CD4-positive, alpha-beta memory T cell (primary cell): ENCODE measurements at regions of chr21 and their contacts with region 1.

Region 1: GRCh38 chr21:34630536-34631143 is 15.7 kb upstream of the RCAN1 start:
- DNase-seq: peak in 4 of 5 donors; percentile 52 to 61 (median 58)
- H3K4me3 ChIP-seq: no peak overlapping the region
- H3K4me3 Mint-ChIP-seq: no peak overlapping the region
- H3K27ac ChIP-seq: no peak overlapping the region
- H3K27ac Mint-ChIP-seq: no peak overlapping the region
- H3K4me1 ChIP-seq: no peaks in the 10 kb centered on the region
- H3K4me1 Mint-ChIP-seq: no peaks in the 10 kb centered on the region
- H3K27me3 ChIP-seq: no peaks in the 10 kb centered on the region
- H3K27me3 Mint-ChIP-seq: peaks cover 6 to 9% of the 10 kb centered on the region in 2 donors

Region 2: GRCh38 chr21:34362136-34362444 is 268.6 kb before region 1 on chr21:
- CTCF ChIA-PET with region 1: interaction called, 26 read pairs
- POLR2A ChIA-PET with region 1: no interaction called
- intact Hi-C with region 1: loop called (anchors 1 kb)
- DNase-seq: no peak
- H3K4me3 ChIP-seq: no peak overlapping the region
- H3K4me3 Mint-ChIP-seq: no peak overlapping the region
- H3K27ac ChIP-seq: no peak overlapping the region
- H3K27ac Mint-ChIP-seq: no peak overlapping the region
- H3K4me1 ChIP-seq: no peaks in the 10 kb centered on the region
- H3K4me1 Mint-ChIP-seq: peaks cover 3 to 7% (median 5%) of the 10 kb centered on the region in 4 donors
- H3K27me3 ChIP-seq: peaks cover 6% of the 10 kb centered on the region
- H3K27me3 Mint-ChIP-seq: peaks cover 8 to 11% of the 10 kb centered on the region in 2 donors

Region 3: GRCh38 chr21:34367321-34367935 is 263.2 kb before region 1 on chr21:
- CTCF ChIA-PET with region 1: interaction called, 26 read pairs
- POLR2A ChIA-PET with region 1: no interaction called
- intact Hi-C with region 1: loop called (anchors 1 kb)
- DNase-seq: peak; percentile 24 to 53 (median 34)
- H3K4me3 ChIP-seq: no peak overlapping the region
- H3K4me3 Mint-ChIP-seq: no peak overlapping the region
- H3K27ac ChIP-seq: no peak overlapping the region
- H3K27ac Mint-ChIP-seq: no peak overlapping the region
- H3K4me1 ChIP-seq: no peaks in the 10 kb centered on the region
- H3K4me1 Mint-ChIP-seq: no peaks in the 10 kb centered on the region
- H3K27me3 ChIP-seq: no peaks in the 10 kb centered on the region
- H3K27me3 Mint-ChIP-seq: peaks cover 6 to 11% of the 10 kb centered on the region in 2 donors

Region 4: GRCh38 chr21:34509151-34509550 is 121.5 kb before region 1 on chr21:
- CTCF ChIA-PET with region 1: no interaction called
- POLR2A ChIA-PET with region 1: no interaction called
- intact Hi-C with region 1: loop called (anchors 1 kb)
- DNase-seq: no peak
- H3K4me3 ChIP-seq: no peak overlapping the region
- H3K4me3 Mint-ChIP-seq: no peak overlapping the region
- H3K27ac ChIP-seq: no peak overlapping the region
- H3K27ac Mint-ChIP-seq: no peak overlapping the region
- H3K4me1 ChIP-seq: no peaks in the 10 kb centered on the region
- H3K4me1 Mint-ChIP-seq: no peaks in the 10 kb centered on the region
- H3K27me3 ChIP-seq: no peaks in the 10 kb centered on the region
- H3K27me3 Mint-ChIP-seq: peaks cover 0 to 4% of the 10 kb centered on the region in 2 donors

Region 5: DNA sequence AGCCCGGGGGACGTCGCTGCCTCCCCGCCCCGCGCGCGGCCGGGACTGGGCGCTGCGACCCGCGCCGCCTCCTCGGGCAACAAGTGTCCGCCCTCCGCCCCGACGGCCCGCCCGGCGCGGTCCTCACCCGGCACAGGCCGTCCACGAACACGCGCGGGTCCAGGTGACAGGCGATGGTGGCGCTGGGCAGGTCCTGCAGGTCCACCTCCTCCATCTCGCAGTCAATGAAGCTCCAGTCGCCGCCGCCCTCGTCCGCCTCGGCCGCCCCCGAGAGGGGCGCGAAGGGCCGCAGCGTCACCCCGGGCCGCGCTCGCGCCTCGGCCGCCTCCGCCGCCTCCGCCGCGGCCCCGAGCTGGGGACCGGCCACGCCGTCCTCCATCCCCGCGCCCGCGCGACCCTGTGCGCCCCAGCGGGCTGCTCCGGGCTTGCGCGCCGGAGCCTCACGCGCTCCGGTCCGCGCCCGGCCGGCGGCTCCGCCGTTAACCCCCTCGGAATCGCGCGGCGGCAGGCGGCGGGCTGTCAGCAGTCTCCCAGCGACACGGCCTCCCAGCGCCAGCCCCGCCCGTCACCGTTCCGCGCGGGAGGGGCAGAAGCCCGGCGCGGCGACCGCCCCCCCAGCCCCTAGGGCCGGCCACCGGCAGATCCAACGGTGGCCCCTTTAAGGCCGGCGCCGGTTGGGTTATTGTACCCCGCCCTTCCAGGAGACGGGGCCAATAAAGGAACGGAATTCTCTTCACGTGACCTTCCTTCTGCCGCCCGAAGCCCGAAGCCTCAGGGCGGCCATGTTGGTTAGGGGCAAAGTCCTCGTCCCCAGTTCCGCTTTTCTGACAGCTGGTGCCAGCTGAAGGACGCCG is 15.8 kb before region 1 on chr21 and contains the start of gene RCAN1:
- CTCF ChIA-PET with region 1: interaction called, 8 read pairs
- POLR2A ChIA-PET with region 1: no interaction called
- intact Hi-C with region 1: loop called (anchors 1 kb)
- DNase-seq: peak; percentile 85 to 91 (median 88)
- H3K4me3 ChIP-seq: peak within 1 kb of the TSS; percentile 18 to 61
- H3K4me3 Mint-ChIP-seq: peak within 1 kb of the TSS; percentile 90 to 95 (median 92)
- H3K27ac ChIP-seq: peak within 1 kb of the TSS; percentile 31
- H3K27ac Mint-ChIP-seq: peak within 1 kb of the TSS; percentile 85 to 96 (median 93)
- H3K4me1 ChIP-seq: peaks cover 16% of the 10 kb centered on the region
- H3K4me1 Mint-ChIP-seq: peaks cover 14 to 25% (median 20%) of the 10 kb centered on the region in 4 donors
- H3K27me3 ChIP-seq: no peaks in the 10 kb centered on the region
- H3K27me3 Mint-ChIP-seq: peaks cover 0 to under 1% of the 10 kb centered on the region in 2 donors
- total RNA-seq, gene RCAN1: 4.7 to 6.3 TPM

Region 6: DNA sequence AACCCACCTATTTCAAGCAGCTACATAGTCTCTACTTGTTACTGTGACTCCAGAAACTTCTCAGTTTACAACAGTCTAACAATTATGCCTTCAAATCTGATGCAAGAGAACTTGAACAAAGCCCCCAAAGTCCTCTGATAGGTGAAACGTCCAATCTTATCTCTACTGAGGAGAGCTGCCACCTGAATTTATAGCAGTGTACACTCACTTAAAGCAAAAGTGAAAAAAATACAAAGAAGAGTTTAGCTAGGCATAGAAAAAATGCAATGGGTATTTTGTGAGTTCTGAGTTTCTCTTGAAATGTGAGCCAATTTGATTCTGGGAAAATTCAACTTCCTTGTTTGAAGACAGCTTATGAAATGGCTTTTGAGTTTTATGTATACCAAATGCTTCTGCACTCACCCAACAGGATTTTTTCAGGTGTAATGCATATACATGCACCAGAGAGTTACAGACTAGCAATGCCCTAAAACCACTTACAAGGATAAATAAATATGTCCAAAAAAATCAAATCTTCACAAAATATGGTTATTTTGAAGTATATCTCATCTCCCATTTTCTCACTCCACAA is 20.3 kb after region 1 on chr21:
- CTCF ChIA-PET with region 1: interaction called, 3 read pairs
- POLR2A ChIA-PET with region 1: no interaction called
- intact Hi-C with region 1: loop called (anchors 1 kb)
- DNase-seq: no peak
- H3K4me3 ChIP-seq: no peak overlapping the region
- H3K4me3 Mint-ChIP-seq: no peak overlapping the region
- H3K27ac ChIP-seq: no peak overlapping the region
- H3K27ac Mint-ChIP-seq: no peak overlapping the region
- H3K4me1 ChIP-seq: no peaks in the 10 kb centered on the region
- H3K4me1 Mint-ChIP-seq: peaks cover 0 to 3% (median 1%) of the 10 kb centered on the region in 4 donors
- H3K27me3 ChIP-seq: no peaks in the 10 kb centered on the region
- H3K27me3 Mint-ChIP-seq: peaks cover 18 to 29% of the 10 kb centered on the region in 2 donors